A673 (cell line): ENCODE measurements at regions of chr7 and their contacts with region 1.

Region 1: GRCh38 chr7:47188653-47189315 is 393.1 kb downstream of the TNS3 start:
- DNase-seq: no peak
- H3K4me3 ChIP-seq: no peak overlapping the region
- H3K27ac ChIP-seq: no peak overlapping the region
- H3K4me1 ChIP-seq: no peaks in the 10 kb centered on the region
- H3K27me3 ChIP-seq: peaks cover 26% of the 10 kb centered on the region
- CTCF ChIP-seq: no peak

Region 2: GRCh38 chr7:46786221-46786954 is 402.4 kb before region 1 on chr7:
- CTCF ChIA-PET with region 1: interaction called, 10 read pairs
- POLR2A ChIA-PET with region 1: no interaction called
- intact Hi-C with region 1: no loop called
- DNase-seq: peak; percentile 34
- H3K4me3 ChIP-seq: no peak overlapping the region
- H3K27ac ChIP-seq: no peak overlapping the region
- H3K4me1 ChIP-seq: no peaks in the 10 kb centered on the region
- H3K27me3 ChIP-seq: no peaks in the 10 kb centered on the region
- CTCF ChIP-seq: no peak

Region 3: DNA sequence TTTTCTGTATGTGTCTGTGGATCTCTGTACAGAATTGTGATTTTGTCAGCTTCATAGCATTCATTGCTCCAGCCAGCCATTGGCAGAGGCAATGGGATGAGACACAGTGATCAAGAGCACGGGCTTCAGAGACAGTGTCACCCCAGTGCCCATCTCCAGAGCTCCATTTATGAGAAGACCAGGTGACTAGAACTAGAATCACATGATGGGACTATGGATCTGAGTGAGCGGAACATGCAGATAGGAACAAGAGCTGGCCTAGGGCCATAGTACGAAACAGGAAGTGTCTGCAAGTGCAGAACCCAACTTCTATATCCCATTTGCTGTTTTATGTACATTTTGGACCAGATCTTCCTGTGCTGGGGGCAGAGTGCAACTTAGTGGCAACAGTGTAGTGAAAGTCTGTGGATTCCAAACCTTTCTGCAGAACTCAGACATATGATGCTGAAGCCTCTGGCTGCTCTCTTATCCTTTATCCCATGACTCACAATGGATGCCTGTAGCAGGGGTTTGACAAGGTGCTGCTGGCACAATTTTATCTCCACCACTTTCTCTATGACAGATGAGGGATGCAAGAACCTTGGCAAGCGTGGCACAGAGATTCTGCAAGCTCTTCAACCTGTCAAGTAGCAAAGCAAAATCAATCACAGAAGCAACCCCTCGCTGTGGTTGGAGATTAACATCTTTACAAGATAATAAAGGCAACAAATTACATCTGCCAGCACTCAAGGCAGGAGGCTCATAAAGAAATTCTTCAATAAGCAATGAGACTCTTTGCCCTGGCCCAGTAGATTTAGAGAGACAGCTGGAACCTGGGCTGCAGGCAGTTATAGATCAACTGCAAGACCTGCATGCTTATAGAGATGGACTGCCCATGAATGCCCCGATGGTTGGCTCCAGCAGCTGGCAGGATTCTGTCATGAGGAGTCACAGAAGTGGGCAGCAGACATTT is 288.2 kb before region 1 on chr7:
- CTCF ChIA-PET with region 1: no interaction called
- POLR2A ChIA-PET with region 1: no interaction called
- intact Hi-C with region 1: no loop called
- DNase-seq: peak; percentile 76
- H3K4me3 ChIP-seq: no peak overlapping the region
- H3K27ac ChIP-seq: no peak overlapping the region
- H3K4me1 ChIP-seq: peaks cover 12% of the 10 kb centered on the region
- H3K27me3 ChIP-seq: no peaks in the 10 kb centered on the region
- CTCF ChIP-seq: no peak

Region 4: DNA sequence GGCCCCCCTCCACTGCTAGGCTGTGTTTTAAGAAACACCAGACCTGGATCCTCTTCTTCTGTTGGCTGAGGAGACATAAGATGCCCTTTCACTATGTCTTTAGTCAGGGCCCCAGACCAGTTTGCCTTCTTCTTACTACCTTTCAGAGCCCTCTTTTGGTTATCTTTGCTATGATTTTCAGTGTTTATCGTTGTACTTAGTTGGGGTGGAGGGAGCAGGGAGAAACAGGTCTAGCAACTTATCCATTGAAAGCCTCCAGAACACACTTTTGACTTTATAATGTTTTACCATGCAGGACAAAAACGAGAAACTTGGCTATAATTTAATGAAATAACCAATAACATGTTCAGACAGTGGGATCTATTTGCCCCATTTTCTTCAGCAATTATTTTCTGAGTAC is 132.1 kb before region 1 on chr7:
- CTCF ChIA-PET with region 1: no interaction called
- POLR2A ChIA-PET with region 1: no interaction called
- intact Hi-C with region 1: no loop called
- DNase-seq: no peak
- H3K4me3 ChIP-seq: no peak overlapping the region
- H3K27ac ChIP-seq: no peak overlapping the region
- H3K4me1 ChIP-seq: no peaks in the 10 kb centered on the region
- H3K27me3 ChIP-seq: no peaks in the 10 kb centered on the region
- CTCF ChIP-seq: no peak

Region 5: GRCh38 chr7:47080816-47081215 is 108.0 kb before region 1 on chr7:
- CTCF ChIA-PET with region 1: no interaction called
- POLR2A ChIA-PET with region 1: no interaction called
- intact Hi-C with region 1: no loop called
- DNase-seq: no peak
- H3K4me3 ChIP-seq: no peak overlapping the region
- H3K27ac ChIP-seq: no peak overlapping the region
- H3K4me1 ChIP-seq: no peaks in the 10 kb centered on the region
- H3K27me3 ChIP-seq: no peaks in the 10 kb centered on the region
- CTCF ChIP-seq: no peak

Region 6: DNA sequence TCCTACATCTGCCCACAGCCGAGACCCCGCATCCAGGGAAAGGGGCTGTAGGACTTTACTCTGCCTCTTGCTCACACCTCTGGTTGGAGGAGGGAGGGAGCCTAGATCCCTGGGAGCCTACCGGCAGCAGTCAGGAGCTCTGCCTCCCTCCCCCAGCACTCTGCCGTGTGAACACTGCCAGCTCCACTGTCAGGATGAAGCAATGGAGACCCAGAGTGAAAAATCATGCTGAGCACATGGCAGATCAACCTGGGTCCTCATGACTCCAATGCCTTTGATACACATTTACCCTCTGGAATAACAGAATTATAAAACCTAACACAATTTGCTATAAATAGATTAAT is 84.6 kb before region 1 on chr7:
- CTCF ChIA-PET with region 1: no interaction called
- POLR2A ChIA-PET with region 1: no interaction called
- intact Hi-C with region 1: no loop called
- DNase-seq: no peak
- H3K4me3 ChIP-seq: no peak overlapping the region
- H3K27ac ChIP-seq: no peak overlapping the region
- H3K4me1 ChIP-seq: no peaks in the 10 kb centered on the region
- H3K27me3 ChIP-seq: no peaks in the 10 kb centered on the region
- CTCF ChIP-seq: no peak